ENCODE measurements at regions of chr7 and their contacts with region 1.

Region 1: DNA sequence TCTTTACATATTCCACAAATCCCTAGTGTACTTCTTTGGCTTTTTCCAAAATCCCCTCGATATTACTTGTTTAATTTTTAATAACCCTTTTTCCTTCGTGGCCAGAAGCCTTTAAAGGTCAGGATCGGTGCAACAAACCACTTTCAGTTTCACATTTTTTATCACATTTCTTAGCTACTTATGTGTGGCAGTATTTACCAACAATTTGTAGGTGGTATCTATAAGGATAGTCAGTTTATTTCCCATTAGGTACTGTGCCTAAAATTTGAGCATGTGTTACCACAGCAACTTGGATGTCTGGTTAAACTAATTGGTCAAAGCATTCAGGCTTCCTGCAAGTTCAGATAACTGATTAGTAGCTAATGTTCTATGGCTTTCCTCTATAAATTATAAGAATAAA is 104.9 kb downstream of the CDK14 start:
- DNase-seq: no peak
- H3K4me3 ChIP-seq: peak overlapping the region; percentile 61
- H3K27ac ChIP-seq: no peak overlapping the region
- H3K4me1 ChIP-seq: peaks cover 10% of the 10 kb centered on the region
- CTCF ChIP-seq: no peak

Region 2: GRCh38 chr7:90690159-90690858 is 10.7 kb before region 1 on chr7:
- CTCF ChIA-PET with region 1: no interaction called
- POLR2A ChIA-PET with region 1: interaction called, 15 read pairs
- intact Hi-C with region 1: no loop called
- DNase-seq: peak; percentile 51
- H3K4me3 ChIP-seq: no peak overlapping the region
- H3K27ac ChIP-seq: no peak overlapping the region
- H3K4me1 ChIP-seq: peaks cover 7% of the 10 kb centered on the region
- CTCF ChIP-seq: peak; percentile 75

Region 3: DNA sequence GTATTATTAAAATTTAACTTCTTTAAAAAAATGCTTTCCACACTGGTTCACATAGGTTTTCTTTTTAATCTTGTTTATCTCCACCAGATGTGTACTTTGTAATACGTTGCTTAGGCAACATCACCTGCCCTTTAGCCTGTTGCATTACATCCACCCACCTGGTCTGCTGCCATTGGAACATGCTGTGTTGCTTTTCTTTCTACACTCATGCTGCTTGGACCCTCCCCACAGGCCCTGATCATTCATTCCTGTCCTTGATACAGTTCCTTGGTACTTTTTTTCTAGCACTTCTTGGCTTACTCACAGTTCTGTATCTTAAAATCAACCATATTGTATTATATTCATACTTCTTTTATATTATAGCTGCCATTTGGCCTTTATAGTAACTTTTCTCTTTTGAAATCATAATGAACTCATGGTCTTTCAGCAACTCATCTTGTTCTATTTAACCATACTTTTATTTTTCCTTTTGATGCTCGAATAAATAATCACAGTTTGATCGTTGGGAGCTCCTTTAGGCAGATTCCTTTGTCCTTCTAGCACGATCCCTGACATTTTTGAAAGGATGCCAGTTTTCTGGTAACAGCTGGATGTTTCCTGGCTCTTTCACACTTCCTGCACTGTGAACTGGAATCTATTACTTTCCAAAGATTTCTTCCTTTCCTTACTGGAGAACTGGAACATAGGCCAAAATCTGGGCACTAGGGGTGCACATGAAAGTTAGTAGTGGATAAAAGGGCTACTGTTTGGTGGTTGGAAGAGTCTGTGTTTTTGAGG is 20.2 kb after region 1 on chr7:
- CTCF ChIA-PET with region 1: interaction called, 3 read pairs
- POLR2A ChIA-PET with region 1: interaction called, 10 read pairs
- intact Hi-C with region 1: no loop called
- DNase-seq: peak; percentile 67
- H3K4me3 ChIP-seq: peak overlapping the region; percentile 10
- H3K27ac ChIP-seq: peak overlapping the region; percentile 53
- H3K4me1 ChIP-seq: peaks cover 100% of the 10 kb centered on the region
- CTCF ChIP-seq: no peak

Region 4: DNA sequence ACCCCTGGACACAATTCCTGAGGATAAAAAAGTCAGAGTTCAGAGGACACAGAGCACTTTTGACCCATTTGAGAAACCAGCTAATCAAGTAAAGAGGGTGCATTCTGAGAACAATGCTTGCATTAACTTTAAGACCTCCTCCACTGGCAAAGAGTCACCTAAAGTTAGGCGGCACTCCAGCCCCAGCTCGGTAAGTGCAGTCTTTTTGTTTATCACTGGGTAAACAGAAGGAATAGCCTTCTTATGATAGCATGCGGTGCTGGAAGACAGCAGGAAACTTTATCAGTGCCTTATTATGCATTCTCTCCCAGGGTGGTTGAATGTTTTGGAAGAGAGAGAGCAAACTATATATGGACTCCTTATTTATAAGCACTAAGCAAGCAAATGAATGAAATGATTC is 25.6 kb after region 1 on chr7:
- CTCF ChIA-PET with region 1: interaction called, 3 read pairs
- POLR2A ChIA-PET with region 1: interaction called, 11 read pairs
- intact Hi-C with region 1: no loop called
- DNase-seq: no peak
- H3K4me3 ChIP-seq: peak overlapping the region; percentile 66
- H3K27ac ChIP-seq: peak overlapping the region; percentile 81
- H3K4me1 ChIP-seq: peaks cover 80% of the 10 kb centered on the region
- CTCF ChIP-seq: no peak

Measured in OCI-LY7 (cell line).